ENCODE measurements at regions of chr11 and their contacts with region 1.

Region 1: DNA sequence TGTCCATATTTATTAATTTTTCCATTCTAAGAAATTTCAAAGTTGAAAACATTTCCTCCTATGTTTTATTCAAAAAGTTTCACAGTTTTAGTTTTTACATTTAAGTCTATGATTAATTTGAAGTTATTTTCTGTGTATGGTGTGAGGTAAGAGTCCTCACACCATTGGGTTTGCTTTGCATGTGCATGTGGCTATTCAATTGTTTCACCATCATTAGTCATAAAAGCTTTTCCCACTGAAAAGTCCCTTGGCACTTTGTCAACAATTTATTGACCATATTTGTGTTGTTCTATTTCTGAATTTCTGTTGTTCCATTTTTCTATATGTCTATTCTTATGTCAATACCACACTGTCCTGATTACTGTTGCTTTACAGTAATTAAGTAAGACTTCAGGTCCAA is 186.5 kb downstream of the KIF18A start:
- DNase-seq: no peak
- H3K4me3 ChIP-seq: no peak overlapping the region
- H3K27ac ChIP-seq: no peak overlapping the region
- H3K4me1 ChIP-seq: no peaks in the 10 kb centered on the region
- H3K27me3 ChIP-seq: no peaks in the 10 kb centered on the region
- CTCF ChIP-seq: no peak
- POLR2A ChIP-seq: no peak

Region 2: GRCh38 chr11:28448186-28448585 is 526.7 kb after region 1 on chr11:
- intact Hi-C with region 1: no loop called
- DNase-seq: no peak
- H3K4me3 ChIP-seq: no peak overlapping the region
- H3K27ac ChIP-seq: no peak overlapping the region
- H3K4me1 ChIP-seq: no peaks in the 10 kb centered on the region
- H3K27me3 ChIP-seq: no peaks in the 10 kb centered on the region
- CTCF ChIP-seq: no peak
- POLR2A ChIP-seq: no peak

Region 3: GRCh38 chr11:28504555-28505110 is 583.2 kb after region 1 on chr11:
- intact Hi-C with region 1: loop called (anchors 5 kb)
- DNase-seq: no peak
- H3K4me3 ChIP-seq: no peak overlapping the region
- H3K27ac ChIP-seq: no peak overlapping the region
- H3K4me1 ChIP-seq: no peaks in the 10 kb centered on the region
- H3K27me3 ChIP-seq: no peaks in the 10 kb centered on the region
- CTCF ChIP-seq: no peak
- POLR2A ChIP-seq: no peak

Measured in breast epithelium (tissue), 4 donors.